Dorsolateral prefrontal cortex (tissue), 120 donors: ENCODE measurements at regions of chr1 and their contacts with region 1.

Region 1: GRCh38 chr1:198763298-198763714 is 124.5 kb downstream of the PTPRC start:
- DNase-seq: no peak
- H3K4me3 ChIP-seq: peak overlapping the region in 17 of 59 donors; percentile 1 to 37 (median 17)
- H3K27ac ChIP-seq: peak overlapping the region in 48 of 59 donors; percentile 1 to 80 (median 54)
- H3K27me3 ChIP-seq: no peaks in the 10 kb centered on the region
- CTCF ChIP-seq: peak in 1 of 56 donors; percentile 13

Region 2: GRCh38 chr1:198798923-198799386 is 35.6 kb after region 1 on chr1:
- intact Hi-C with region 1: no loop called
- DNase-seq: no peak
- H3K4me3 ChIP-seq: no peak overlapping the region
- H3K27ac ChIP-seq: no peak overlapping the region
- H3K27me3 ChIP-seq: no peaks in the 10 kb centered on the region
- CTCF ChIP-seq: peak in 3 of 56 donors; percentile 6 to 34 (median 32)

Region 3: GRCh38 chr1:199113265-199113869 is 350.1 kb after region 1 on chr1:
- intact Hi-C with region 1: loop called in 1 of 2 experiments (anchors 2 kb)
- DNase-seq: peak in 9 of 10 donors; percentile 34 to 86 (median 62)
- H3K4me3 ChIP-seq: no peak overlapping the region
- H3K27ac ChIP-seq: peak overlapping the region in 31 of 59 donors; percentile 10 to 75 (median 39)
- H3K27me3 ChIP-seq: no peaks in the 10 kb centered on the region
- CTCF ChIP-seq: peak in 54 of 56 donors; percentile 48 to 87 (median 70)

Region 4: DNA sequence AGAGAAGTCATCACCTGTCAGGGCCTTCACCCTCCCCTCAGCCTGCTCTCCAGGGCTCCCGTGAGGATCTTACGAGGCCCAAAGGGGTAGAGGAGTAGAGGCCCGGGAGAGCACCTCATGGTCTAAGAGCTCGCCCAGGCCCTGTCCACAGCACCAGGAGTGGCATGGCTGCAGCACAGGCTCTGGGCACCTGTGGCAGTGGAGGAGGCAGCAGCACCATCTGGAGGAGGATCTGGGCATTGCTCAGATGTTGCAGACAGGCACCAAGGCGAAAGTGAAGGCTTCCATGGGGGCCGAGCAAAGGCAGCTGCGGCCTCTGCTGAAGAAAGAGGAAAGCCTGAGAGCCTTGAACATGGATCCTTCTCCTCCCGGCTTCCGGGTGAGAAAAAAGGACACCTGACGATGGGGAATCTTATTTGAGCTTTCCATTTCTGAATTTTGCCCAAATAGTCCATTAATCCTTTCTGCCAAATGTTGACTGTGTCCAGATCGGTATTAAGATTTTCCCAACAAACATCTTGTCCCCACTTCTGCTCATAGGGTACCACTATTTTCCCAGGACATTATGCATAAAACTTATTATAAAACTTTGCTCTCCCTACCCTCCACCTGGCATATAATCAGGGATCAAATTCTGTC is 480.2 kb after region 1 on chr1:
- intact Hi-C with region 1: loop called (anchors 5 to 10 kb)
- DNase-seq: peak; percentile 7 to 82 (median 71)
- H3K4me3 ChIP-seq: peak overlapping the region in 4 of 59 donors; percentile 19 to 32 (median 26)
- H3K27ac ChIP-seq: peak overlapping the region in 7 of 59 donors; percentile 3 to 39 (median 17)
- H3K27me3 ChIP-seq: peaks cover 0 to 4% (median 0%) of the 10 kb centered on the region in 45 donors
- CTCF ChIP-seq: peak in 54 of 56 donors; percentile 35 to 91 (median 70)